MCF 10A (cell line): ENCODE measurements at regions of chrX and their contacts with region 1.

Region 1: DNA sequence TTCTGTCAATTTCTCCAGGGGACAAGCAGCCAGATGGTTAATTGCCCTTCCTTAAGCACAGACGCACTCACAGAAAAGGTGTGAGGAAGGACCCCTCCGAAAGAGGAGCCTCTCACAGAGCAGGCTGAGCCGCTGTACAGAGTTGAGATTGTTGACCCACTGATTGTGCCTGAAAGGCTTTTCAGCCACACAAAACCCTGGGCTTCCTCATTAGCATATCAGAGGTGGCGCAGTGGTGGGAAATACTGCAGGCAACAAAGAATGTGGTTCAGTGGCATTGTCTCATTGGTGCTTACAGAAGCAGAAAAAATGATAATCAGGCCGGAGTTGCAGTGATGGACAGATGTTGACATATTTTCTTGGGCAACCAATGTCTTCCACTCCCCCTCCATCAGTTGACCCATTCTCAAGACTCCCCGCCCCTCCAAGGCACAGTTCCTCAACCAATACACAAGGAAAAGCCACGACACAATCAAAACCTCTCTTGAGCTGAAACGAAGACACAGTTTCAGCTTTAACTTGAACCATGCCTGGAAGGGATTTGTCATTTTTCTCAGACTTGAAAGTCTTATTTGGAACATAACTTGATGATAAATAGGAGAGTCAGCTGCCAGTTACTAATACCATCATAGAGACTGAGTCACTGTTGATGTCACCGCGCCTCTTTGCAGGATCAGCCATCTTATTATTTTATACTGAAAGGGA is 53.1 kb downstream of the ATXN3L start:
- DNase-seq: peak; percentile 40
- H3K4me3 Mint-ChIP-seq: no peak overlapping the region
- H3K27ac Mint-ChIP-seq: no peak overlapping the region
- H3K4me1 Mint-ChIP-seq: no peaks in the 10 kb centered on the region
- H3K27me3 Mint-ChIP-seq: no peaks in the 10 kb centered on the region
- CTCF ChIP-seq: no peak

Region 2: DNA sequence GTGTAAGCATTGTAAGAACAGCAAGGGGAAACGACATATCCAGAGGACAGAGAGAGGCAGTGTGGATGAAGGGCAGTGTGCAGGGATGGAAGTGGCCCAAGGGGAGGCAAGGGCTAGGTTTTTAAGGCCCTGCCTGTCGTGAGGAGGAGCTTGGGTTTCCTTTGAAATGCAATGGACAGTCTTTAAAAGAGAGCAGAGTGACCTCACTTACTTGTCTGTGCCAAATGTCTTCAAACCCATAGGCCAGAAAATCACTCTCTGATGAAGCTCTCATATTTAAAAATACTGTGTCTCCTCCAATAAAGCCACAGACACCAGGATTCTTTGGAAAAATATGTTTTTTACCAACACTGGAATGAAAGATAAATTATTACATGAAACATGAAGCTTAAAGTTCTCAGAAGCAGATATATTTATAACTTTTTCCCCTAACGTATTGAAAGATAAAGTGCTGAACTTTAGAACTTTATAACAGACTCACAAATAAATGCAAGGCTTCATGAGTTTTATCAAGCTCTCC is 72.3 kb after region 1 on chrX:
- CTCF ChIA-PET with region 1: no interaction called
- POLR2A ChIA-PET with region 1: no interaction called
- intact Hi-C with region 1: loop called (anchors 1 kb)
- DNase-seq: no peak
- H3K4me3 Mint-ChIP-seq: no peak overlapping the region
- H3K27ac Mint-ChIP-seq: no peak overlapping the region
- H3K4me1 Mint-ChIP-seq: no peaks in the 10 kb centered on the region
- H3K27me3 Mint-ChIP-seq: no peaks in the 10 kb centered on the region
- CTCF ChIP-seq: no peak